Activated CD8-positive, alpha-beta T cell treated with anti-CD3 and anti-CD28 coated beads, Interleukin-2, amount 10 ng/mL, durations not matched to agents 7 days and 5 days (primary cell): ENCODE measurements at regions of chr14 and their contacts with region 1.

Region 1: DNA sequence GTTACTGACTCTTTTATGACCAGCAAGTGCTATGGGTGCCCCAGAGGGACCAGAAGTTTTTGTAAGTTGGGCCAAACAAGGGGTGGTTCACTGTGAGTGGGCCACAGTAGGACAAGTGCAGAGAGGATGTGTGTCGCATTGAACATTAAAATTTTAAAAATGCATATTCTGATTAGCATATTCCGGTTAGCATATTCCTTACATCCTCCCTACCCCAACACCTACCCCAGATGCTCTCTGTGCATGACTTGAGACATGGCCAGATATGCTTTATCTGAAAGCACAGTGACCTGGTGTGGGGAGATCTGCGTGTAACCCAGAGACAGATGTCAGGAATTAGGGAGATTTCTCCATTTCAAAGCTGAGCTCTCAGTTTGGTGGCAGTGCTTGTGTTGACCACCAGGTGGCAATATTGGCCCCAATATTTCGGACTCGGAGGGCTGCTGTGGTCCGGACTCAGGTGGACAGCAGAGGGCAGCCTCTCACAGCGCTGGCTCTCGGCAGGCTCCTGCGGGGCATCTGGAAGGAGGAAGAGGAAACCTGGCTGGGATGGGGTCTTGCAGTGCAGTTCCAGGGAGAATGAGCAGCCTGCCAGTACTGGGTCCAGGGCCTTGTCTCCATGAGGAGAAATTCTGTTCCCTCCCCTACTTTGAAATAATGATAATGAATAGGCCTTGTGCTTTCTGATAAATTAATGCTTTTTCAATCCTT is 1.6 kb upstream of the CEBPE start:
- DNase-seq: peak; percentile 90
- ATAC-seq: peak; percentile 82
- H3K4me3 Mint-ChIP-seq: peak overlapping the region; percentile 48
- H3K27ac Mint-ChIP-seq: peak overlapping the region; percentile 88
- H3K4me1 Mint-ChIP-seq: peaks cover 41% of the 10 kb centered on the region
- H3K27me3 Mint-ChIP-seq: no peaks in the 10 kb centered on the region

Region 2: GRCh38 chr14:23095196-23096108 is 25.2 kb before region 1 on chr14 and contains the start of gene C14orf119:
- CTCF ChIA-PET with region 1: interaction called, 52 read pairs
- POLR2A ChIA-PET with region 1: interaction called, 20 read pairs
- DNase-seq: peak; percentile 100
- ATAC-seq: peak; percentile 94
- H3K4me3 Mint-ChIP-seq: no peak within 1 kb of the TSS
- H3K27ac Mint-ChIP-seq: no peak within 1 kb of the TSS
- H3K4me1 Mint-ChIP-seq: peaks cover 33% of the 10 kb centered on the region
- H3K27me3 Mint-ChIP-seq: no peaks in the 10 kb centered on the region
- total RNA-seq, gene C14orf119: 46.0 to 47.0 TPM

Region 3: DNA sequence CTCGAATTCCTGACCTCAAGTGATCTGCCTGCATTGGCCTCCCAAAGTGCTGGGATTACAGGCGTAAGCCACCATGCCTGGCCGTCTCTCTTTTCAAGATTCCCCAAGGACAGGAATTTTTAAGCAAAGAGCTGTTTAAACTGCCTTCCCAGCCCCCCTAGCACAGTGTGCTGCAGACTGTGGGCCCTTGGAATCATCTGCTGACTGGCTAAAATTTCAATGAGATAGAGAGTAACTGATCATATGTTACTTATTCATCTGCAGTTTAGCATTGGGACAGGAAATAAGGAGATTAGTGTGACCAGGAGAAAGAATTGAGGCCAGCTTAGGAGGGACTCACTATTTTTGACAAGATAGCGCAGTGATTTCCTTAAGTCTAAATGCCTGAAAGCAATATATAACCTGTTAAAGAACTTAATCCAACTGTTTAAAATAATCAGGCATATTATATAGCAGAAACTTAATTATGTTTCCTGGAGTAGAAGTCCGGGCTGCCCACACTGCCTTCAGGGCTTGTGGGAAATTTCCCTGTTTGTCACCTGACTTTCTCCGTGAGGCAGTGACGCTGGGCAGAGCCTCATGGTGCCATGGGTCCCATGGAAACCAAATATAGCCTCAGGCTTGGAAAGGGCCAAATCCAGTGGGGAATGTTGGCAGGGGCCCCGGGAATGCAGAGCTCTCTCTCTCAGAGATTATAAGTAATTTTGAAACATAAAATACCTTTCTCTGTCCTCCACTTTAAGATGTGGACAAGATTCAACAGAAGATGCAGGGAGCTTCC is 21.2 kb after region 1 on chr14:
- CTCF ChIA-PET with region 1: interaction called, 28 read pairs
- POLR2A ChIA-PET with region 1: no interaction called
- DNase-seq: no peak
- ATAC-seq: no peak
- H3K4me3 Mint-ChIP-seq: no peak overlapping the region
- H3K27ac Mint-ChIP-seq: no peak overlapping the region
- H3K4me1 Mint-ChIP-seq: no peaks in the 10 kb centered on the region
- H3K27me3 Mint-ChIP-seq: peaks cover 3% of the 10 kb centered on the region

Region 4: GRCh38 chr14:23195550-23196101 is 74.9 kb after region 1 on chr14:
- CTCF ChIA-PET with region 1: interaction called, 378 read pairs
- POLR2A ChIA-PET with region 1: no interaction called
- DNase-seq: no peak
- ATAC-seq: no peak
- H3K4me3 Mint-ChIP-seq: no peak overlapping the region
- H3K27ac Mint-ChIP-seq: no peak overlapping the region
- H3K4me1 Mint-ChIP-seq: no peaks in the 10 kb centered on the region
- H3K27me3 Mint-ChIP-seq: peaks cover 7% of the 10 kb centered on the region

Region 5: GRCh38 chr14:23301288-23301968 is 180.7 kb after region 1 on chr14:
- CTCF ChIA-PET with region 1: interaction called, 42 read pairs
- POLR2A ChIA-PET with region 1: no interaction called
- DNase-seq: peak; percentile 97
- ATAC-seq: peak; percentile 86
- H3K4me3 Mint-ChIP-seq: peak overlapping the region; percentile 91
- H3K27ac Mint-ChIP-seq: peak overlapping the region; percentile 99
- H3K4me1 Mint-ChIP-seq: peaks cover 31% of the 10 kb centered on the region
- H3K27me3 Mint-ChIP-seq: peaks cover 11% of the 10 kb centered on the region